WTC11 (cell line): ENCODE measurements at regions of chr4 and their contacts with region 1.

Region 1: GRCh38 chr4:56879811-56880395 is 27.8 kb upstream of the REST start:
- DNase-seq: no peak
- ATAC-seq: no peak
- H3K4me3 Mint-ChIP-seq: no peak overlapping the region
- H3K27ac Mint-ChIP-seq: no peak overlapping the region
- H3K4me1 Mint-ChIP-seq: peaks cover 11% of the 10 kb centered on the region
- H3K27me3 Mint-ChIP-seq: no peaks in the 10 kb centered on the region
- CTCF ChIP-seq: no peak

Region 2: GRCh38 chr4:56940971-56941370 is 61.1 kb after region 1 on chr4:
- CTCF ChIA-PET with region 1: no interaction called
- POLR2A ChIA-PET with region 1: interaction called, 14 read pairs
- DNase-seq: no peak
- ATAC-seq: no peak
- H3K4me3 Mint-ChIP-seq: no peak overlapping the region
- H3K27ac Mint-ChIP-seq: no peak overlapping the region
- H3K4me1 Mint-ChIP-seq: no peaks in the 10 kb centered on the region
- H3K27me3 Mint-ChIP-seq: no peaks in the 10 kb centered on the region
- CTCF ChIP-seq: no peak